Activated T-helper 1 cell treated with anti-CD3 and anti-CD28 coated beads, Interleukin-12 subunit alpha, Interleukin-12 subunit beta, Interleukin-2, Interleukin-4 antibody, amounts not matched to agents 30 ng/mL and 10 ng/mL and 1 ng/mL, durations not matched to agents 14 hours and 24 hours and 36 hours (primary cell): ENCODE measurements at regions of chr3 and their contacts with region 1.

Region 1: DNA sequence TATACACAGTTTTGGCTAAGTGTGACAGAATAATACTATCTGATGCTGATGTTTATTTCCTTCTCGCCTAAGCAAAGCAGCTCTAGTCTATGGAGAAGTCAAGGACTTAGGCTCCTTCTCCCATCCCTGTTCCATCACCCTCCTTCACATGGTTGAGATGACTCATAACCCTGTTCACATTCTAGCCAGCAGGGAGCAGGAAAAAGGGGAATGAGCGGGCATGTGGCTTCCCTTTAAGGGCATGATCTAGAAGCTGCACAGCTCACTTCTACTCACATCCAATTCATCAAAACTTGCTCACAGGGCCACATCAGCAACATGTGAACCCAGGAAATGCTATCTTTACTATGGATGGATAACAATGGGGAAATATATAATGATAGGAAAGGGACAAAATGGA is 40.9 kb downstream of the CBLB start:
- DNase-seq: no peak
- H3K4me3 Mint-ChIP-seq: peak overlapping the region; percentile 57
- H3K27ac Mint-ChIP-seq: peak overlapping the region; percentile 96
- H3K4me1 Mint-ChIP-seq: peaks cover 88% of the 10 kb centered on the region
- H3K27me3 Mint-ChIP-seq: no peaks in the 10 kb centered on the region

Region 2: DNA sequence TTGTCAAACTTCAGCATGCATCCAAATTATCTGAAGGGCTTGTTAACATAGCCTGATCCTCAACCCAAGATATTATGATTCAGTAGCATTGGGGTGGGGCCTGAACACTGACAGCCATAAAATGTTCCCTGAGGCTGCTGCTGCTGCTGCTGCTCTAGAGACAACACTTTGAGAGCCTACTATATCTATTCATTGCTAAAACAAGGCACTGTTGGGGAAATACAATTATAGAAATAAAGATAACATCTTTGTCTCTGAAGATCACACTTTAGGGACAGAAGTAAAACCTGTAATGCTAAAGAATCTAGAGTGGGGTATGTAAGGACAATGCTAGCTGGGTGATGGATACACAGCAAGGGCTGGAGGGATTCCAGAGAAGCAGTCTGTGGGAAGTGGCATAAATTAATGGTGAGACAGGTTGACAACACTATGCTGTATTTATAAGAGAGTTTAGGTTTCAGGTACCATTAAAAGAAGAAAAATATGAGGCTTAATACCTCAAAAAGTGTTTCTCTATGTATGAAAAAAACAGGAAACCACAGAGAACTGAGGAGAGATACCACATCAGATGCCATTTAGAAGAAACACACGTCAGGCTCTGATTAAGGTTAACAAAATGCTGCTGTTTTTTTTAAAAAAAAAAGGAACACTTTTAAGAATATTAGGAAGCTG is 75.1 kb before region 1 on chr3:
- intact Hi-C with region 1: loop called (anchors 1 kb)
- DNase-seq: peak; percentile 24
- H3K4me3 Mint-ChIP-seq: peak overlapping the region; percentile 57
- H3K27ac Mint-ChIP-seq: peak overlapping the region; percentile 98
- H3K4me1 Mint-ChIP-seq: peaks cover 88% of the 10 kb centered on the region
- H3K27me3 Mint-ChIP-seq: no peaks in the 10 kb centered on the region

Region 3: DNA sequence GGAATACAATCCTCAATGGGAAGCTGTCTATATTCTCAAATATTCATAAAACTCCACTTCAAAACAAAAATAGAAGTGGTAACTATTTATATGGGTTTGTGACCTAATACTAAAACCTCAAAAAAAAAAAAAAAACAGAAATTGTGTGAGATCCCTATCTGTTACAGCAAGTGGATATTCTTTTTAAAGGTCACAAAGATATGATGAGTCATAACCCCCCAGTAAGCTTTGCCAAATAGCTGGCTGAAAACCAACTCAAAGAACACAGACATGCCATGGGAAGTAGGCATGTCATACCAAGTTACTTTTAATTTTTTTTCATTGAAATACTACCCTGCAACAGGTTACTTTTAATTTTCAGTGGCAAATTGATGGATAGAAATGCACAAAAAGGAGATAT is 21.6 kb before region 1 on chr3:
- intact Hi-C with region 1: loop called (anchors 1 kb)
- DNase-seq: no peak
- H3K4me3 Mint-ChIP-seq: peak overlapping the region; percentile 40
- H3K27ac Mint-ChIP-seq: peak overlapping the region; percentile 84
- H3K4me1 Mint-ChIP-seq: peaks cover 67% of the 10 kb centered on the region
- H3K27me3 Mint-ChIP-seq: no peaks in the 10 kb centered on the region

Region 4: DNA sequence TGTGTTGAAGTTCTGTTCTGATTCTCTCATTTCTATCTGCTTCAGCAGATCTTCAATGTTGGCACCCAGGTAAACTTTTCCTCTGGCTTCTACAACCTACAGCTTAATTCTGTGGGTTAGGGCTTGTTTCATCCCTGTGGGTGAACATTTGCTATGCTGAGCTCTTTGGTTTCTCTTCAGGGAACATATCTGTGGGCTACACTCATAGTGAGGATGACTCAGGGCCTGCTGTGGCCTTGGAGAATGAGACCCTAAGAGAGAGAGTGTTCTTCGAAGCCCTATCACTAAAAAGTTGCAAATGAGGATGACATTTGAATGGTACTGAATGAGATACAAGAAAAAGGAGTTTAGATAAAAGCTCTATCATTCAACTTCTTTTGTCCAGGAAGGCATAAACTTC is 387.1 kb after region 1 on chr3:
- intact Hi-C with region 1: loop called (anchors 2 kb)
- DNase-seq: peak; percentile 5
- H3K4me3 Mint-ChIP-seq: peak overlapping the region; percentile 43
- H3K27ac Mint-ChIP-seq: peak overlapping the region; percentile 82
- H3K4me1 Mint-ChIP-seq: peaks cover 56% of the 10 kb centered on the region
- H3K27me3 Mint-ChIP-seq: no peaks in the 10 kb centered on the region

Region 5: DNA sequence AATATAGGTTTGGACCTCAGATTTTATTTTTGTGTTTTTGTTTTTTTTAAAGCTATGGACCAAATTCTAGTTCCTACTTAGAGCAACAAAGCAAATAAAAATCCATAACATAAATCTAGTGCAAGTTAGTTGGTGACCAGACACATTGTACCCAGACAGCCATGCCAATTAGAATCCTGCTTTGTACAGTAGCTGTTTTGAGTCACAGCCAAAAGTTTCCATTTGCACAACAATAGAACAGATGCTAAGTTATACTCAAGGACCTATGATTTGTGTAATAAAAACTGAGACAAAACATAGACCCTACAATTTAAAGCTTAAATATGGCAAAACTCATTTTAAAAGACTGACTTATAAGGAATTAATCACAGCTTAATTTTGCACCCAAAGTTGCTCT is 554.0 kb after region 1 on chr3:
- intact Hi-C with region 1: no loop called
- DNase-seq: no peak
- H3K4me3 Mint-ChIP-seq: no peak overlapping the region
- H3K27ac Mint-ChIP-seq: no peak overlapping the region
- H3K4me1 Mint-ChIP-seq: no peaks in the 10 kb centered on the region
- H3K27me3 Mint-ChIP-seq: no peaks in the 10 kb centered on the region

Region 6: DNA sequence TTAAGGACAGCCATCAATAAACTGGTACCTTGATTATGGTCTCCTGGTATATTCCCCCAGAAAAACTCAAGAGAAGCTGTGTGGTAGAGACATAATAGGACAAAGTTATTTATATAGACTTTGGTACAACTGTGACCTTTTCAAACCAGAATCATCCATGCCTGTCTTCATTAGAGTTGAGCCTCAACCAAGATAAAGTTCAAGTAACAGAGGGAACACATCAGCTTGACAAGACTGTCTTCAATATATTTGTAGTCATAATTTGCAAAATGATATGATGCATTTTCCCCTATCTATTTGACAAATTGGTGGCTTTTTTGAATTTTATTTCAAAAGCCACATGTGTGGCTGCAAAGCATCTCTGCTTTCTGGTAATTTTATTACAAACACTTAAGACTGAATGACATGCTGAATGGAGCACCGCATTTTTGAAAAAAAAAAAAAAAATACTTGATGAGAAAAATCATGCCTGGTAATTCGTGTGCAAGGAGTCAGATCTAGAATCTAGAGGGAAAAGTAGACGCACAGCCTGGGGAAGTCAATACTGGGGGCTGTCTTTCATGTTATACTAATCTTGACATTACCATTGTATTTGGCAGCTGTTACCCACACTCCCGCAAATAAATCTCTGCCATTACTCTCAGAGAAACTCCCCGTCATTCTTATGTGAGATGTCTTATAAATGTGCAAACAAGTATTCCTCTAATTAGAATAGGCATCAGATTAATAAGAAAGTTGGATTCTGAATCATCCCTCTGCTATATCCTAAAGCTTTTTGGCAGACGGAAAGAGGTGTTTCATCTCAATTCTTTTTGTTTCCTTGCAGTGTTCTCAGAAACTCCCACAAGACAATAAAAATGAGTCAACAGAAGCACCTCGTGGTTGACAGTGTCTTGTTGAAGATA is 595.6 kb after region 1 on chr3:
- intact Hi-C with region 1: loop called (anchors 1 kb)
- DNase-seq: no peak
- H3K4me3 Mint-ChIP-seq: peak overlapping the region; percentile 45
- H3K27ac Mint-ChIP-seq: peak overlapping the region; percentile 90
- H3K4me1 Mint-ChIP-seq: peaks cover 50% of the 10 kb centered on the region
- H3K27me3 Mint-ChIP-seq: no peaks in the 10 kb centered on the region